ENCODE measurements at regions of chr1 and their contacts with region 1.

Region 1: DNA sequence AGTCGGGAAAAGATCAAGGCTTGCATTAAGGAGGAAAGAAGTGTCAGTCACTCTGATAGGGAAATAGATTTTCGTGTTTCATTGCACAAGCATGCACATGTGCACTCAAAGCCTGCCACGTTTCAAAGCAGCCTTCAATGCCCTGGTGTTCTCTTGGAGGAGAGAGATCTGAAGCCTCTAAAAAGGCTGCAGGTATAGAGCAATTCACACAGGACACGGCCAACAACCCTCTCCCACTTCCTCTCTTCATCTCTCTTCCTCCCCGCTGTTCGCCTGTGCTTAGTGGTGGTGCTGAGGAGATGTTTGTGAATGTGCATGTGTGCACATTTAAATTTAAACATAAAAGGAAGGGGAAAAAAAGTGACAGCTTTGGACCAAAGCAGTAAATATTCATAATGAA is 117.7 kb downstream of the NUF2 start:
- DNase-seq: no peak
- H3K4me3 ChIP-seq: no peak overlapping the region
- H3K4me3 Mint-ChIP-seq: no peak overlapping the region
- H3K27ac Mint-ChIP-seq: no peak overlapping the region
- H3K4me1 ChIP-seq: no peaks in the 10 kb centered on the region
- H3K4me1 Mint-ChIP-seq: no peaks in the 10 kb centered on the region
- H3K27me3 ChIP-seq: no peaks in the 10 kb centered on the region
- H3K27me3 Mint-ChIP-seq: peaks cover 22% of the 10 kb centered on the region
- CTCF ChIP-seq: no peak

Region 2: DNA sequence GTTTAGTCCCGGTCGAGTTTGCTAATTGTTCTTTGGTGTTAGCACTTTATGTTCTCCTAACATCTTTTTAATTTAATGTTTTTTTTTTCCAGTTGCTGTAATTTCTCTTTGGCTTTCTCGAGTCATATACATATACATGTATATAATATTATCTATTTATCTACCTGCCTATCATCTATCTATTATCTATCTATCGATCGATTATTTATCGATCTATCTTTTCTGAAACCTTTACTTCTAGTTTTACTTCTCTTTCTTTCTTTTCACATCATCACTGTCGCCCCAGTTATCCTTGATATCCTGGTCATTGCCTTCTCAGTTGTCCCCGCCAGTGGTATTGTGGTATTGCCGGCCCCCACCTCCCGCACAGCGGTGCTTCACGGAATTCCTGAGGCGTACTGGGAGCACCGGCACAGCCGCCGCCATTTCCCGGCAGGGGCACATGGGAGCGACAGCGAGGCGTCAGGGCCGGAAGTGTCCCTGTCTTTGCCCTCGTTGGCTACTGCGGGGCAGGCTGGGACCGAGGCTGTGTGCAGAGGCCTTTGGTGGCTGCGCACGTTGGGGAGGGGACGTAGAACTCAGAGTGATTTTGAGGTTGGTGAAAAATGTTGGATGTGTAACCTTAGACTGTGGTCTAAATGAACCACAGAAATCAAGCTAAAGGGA is 16.6 kb before region 1 on chr1:
- CTCF ChIA-PET with region 1: no interaction called
- POLR2A ChIA-PET with region 1: no interaction called
- intact Hi-C with region 1: loop called (anchors 2 kb)
- DNase-seq: no peak
- H3K4me3 ChIP-seq: no peak overlapping the region
- H3K4me3 Mint-ChIP-seq: no peak overlapping the region
- H3K27ac Mint-ChIP-seq: no peak overlapping the region
- H3K4me1 ChIP-seq: peaks cover 19% of the 10 kb centered on the region
- H3K4me1 Mint-ChIP-seq: peaks cover 7% of the 10 kb centered on the region
- H3K27me3 ChIP-seq: no peaks in the 10 kb centered on the region
- H3K27me3 Mint-ChIP-seq: no peaks in the 10 kb centered on the region
- CTCF ChIP-seq: no peak

Measured in Caco-2 (cell line).